A673 (cell line): ENCODE measurements at regions of chr6 and their contacts with region 1.

Region 1: DNA sequence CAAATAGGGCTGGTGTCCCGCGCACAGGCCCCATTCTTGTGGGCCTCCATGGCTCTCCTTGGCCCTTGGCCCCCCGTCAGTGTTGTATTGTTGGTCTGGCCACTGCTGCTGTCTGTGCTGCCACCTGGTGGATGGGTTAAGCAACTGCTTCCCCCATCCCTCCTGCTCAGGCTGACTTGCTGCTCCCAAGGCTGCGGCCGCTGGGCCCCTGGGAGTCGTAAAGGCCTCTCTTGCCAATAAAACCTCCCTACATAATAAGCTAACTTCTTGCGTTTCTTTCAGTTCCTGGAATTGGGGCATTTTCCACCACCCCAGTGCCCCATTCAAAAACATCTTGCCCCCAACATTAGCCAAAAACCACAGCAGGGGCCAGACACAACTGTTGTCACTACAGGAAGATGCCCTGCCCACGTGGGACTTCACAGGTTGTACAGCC is 27.1 kb downstream of the CD83 start:
- DNase-seq: peak; percentile 92
- H3K4me3 ChIP-seq: no peak overlapping the region
- H3K27ac ChIP-seq: no peak overlapping the region
- H3K4me1 ChIP-seq: peaks cover 61% of the 10 kb centered on the region
- H3K27me3 ChIP-seq: no peaks in the 10 kb centered on the region
- CTCF ChIP-seq: peak; percentile 97

Region 2: GRCh38 chr6:13953061-13953705 is 191.5 kb before region 1 on chr6:
- CTCF ChIA-PET with region 1: interaction called, 13 read pairs
- POLR2A ChIA-PET with region 1: no interaction called
- intact Hi-C with region 1: no loop called
- DNase-seq: peak; percentile 24
- H3K4me3 ChIP-seq: no peak overlapping the region
- H3K27ac ChIP-seq: no peak overlapping the region
- H3K4me1 ChIP-seq: no peaks in the 10 kb centered on the region
- H3K27me3 ChIP-seq: no peaks in the 10 kb centered on the region
- CTCF ChIP-seq: no peak

Region 3: DNA sequence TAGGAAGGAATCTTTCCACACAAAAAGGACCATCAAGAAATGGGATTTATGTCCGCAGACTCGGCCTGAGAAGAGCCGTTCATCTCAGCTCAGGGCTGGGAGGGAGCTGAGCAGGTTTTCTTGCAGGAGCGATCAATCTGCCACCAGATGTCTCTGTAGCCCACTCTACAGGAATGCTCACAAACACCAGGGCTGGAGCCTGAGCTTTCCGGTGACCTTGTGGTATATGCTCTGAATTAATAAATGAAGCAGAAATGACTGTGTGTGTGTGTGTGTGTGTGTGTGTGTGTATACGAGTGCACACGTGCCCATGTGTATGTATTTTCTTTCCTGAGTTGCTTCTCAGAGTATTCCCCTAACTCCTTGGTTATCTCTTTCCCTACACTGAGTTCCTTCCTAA is 15.1 kb before region 1 on chr6:
- CTCF ChIA-PET with region 1: interaction called, 9 read pairs
- POLR2A ChIA-PET with region 1: no interaction called
- intact Hi-C with region 1: loop called (anchors 2 kb)
- DNase-seq: peak; percentile 87
- H3K4me3 ChIP-seq: no peak overlapping the region
- H3K27ac ChIP-seq: peak overlapping the region; percentile 71
- H3K4me1 ChIP-seq: peaks cover 50% of the 10 kb centered on the region
- H3K27me3 ChIP-seq: no peaks in the 10 kb centered on the region
- CTCF ChIP-seq: peak; percentile 84